Ascending aorta (tissue), 2 donors: ENCODE measurements at regions of chr1 and their contacts with region 1.

Region 1: GRCh38 chr1:8097077-8097799 is 71.1 kb upstream of the ERRFI1 start:
- DNase-seq: no peak
- H3K4me3 ChIP-seq: no peak overlapping the region
- H3K27ac ChIP-seq: peak overlapping the region; percentile 82 to 85
- H3K4me1 ChIP-seq: peaks cover 6 to 22% of the 10 kb centered on the region in 2 donors
- H3K27me3 ChIP-seq: no peaks in the 10 kb centered on the region
- CTCF ChIP-seq: no peak

Region 2: DNA sequence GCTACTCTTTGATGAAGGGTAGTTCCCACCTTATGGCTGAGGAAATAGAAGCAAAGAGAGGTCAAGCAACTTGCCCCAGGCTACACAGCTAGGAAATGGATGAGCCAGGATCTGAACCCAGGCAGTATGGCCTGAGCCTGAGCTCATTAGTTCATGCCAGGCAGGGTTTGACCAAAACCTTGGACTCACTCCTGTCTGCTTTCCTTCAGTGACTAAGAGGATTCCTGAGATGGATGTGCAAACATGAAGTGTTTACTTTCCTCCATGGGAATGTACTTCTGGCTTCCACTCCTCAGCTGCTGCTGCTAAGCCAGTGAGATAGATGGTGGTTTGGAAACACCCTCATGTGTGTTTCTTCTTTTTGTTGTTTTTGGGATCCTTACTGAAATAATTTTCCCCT is 36.0 kb before region 1 on chr1:
- intact Hi-C with region 1: loop called (anchors 2 kb)
- DNase-seq: peak; percentile 28 to 84
- H3K4me3 ChIP-seq: peak overlapping the region in 1 of 2 donors; percentile 49
- H3K27ac ChIP-seq: peak overlapping the region; percentile 78 to 89
- H3K4me1 ChIP-seq: peaks cover 0 to 33% of the 10 kb centered on the region in 2 donors
- H3K27me3 ChIP-seq: no peaks in the 10 kb centered on the region
- CTCF ChIP-seq: no peak

Region 3: DNA sequence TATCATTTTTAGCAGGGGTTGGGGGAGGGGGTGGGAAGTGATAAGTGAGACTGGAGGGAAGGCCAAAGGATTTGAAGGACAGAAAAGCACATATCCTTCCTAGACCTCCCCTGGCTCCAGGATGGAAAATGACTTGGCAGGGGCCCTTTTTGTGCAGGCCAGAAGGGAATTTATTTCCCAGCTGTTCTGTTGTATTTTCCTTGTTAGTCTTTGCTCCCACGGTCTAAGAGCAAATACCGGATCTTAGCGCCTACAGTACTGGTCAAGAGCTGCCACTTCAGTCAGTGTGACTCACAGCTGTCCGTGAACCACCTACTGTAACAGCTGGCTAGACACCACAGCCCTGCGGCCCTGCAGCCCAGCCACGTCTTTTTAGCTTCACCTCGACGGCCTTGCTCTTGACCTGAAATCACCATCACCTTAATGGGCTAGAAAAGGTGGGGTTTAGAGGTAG is 20.1 kb before region 1 on chr1:
- intact Hi-C with region 1: loop called (anchors 2 kb)
- DNase-seq: peak in 1 of 2 donors; percentile 89
- H3K4me3 ChIP-seq: no peak overlapping the region
- H3K27ac ChIP-seq: peak overlapping the region; percentile 31 to 79
- H3K4me1 ChIP-seq: peaks cover 14 to 30% of the 10 kb centered on the region in 2 donors
- H3K27me3 ChIP-seq: no peaks in the 10 kb centered on the region
- CTCF ChIP-seq: peak in 1 of 3 experiments; percentile 17

Region 4: GRCh38 chr1:8202182-8202905 is 105.1 kb after region 1 on chr1:
- intact Hi-C with region 1: loop called (anchors 5 kb)
- DNase-seq: peak; percentile 57 to 94
- H3K4me3 ChIP-seq: peak overlapping the region in 1 of 2 donors; percentile 32
- H3K27ac ChIP-seq: peak overlapping the region; percentile 97 to 99
- H3K4me1 ChIP-seq: peaks cover 17 to 52% of the 10 kb centered on the region in 2 donors
- H3K27me3 ChIP-seq: no peaks in the 10 kb centered on the region
- CTCF ChIP-seq: no peak